ENCODE measurements at regions of chr2 and their contacts with region 1.

Region 1: DNA sequence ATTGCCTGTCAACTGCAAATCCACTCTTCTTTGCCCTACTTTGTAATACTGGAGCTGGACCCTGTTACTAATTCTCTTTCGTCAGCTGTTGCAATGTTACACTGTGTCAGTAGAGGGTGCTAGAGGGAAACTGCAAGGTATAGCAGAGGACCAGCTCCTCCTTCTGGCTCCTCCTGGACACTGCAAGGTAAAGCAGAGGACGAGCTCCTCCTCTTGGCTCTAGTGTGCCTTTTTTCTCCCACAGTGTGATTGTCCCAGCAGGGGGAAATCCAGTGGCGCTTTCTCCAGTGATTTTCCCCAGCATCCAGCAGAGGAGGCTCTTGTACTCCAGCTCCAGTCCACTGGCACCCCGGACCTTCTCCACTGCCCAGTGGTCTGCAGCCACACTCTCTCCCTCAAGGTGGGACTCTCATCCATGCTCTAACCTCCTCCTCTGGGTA is 95.6 kb downstream of the CAPN13 start:
- DNase-seq: peak; percentile 84 to 89 (median 85)
- ATAC-seq: peak; percentile 28 to 80 (median 74)
- H3K4me3 ChIP-seq: no peak overlapping the region
- H3K27ac ChIP-seq: no peak overlapping the region
- H3K4me1 ChIP-seq: peaks cover 0 to 20% (median 4%) of the 10 kb centered on the region in 12 donors
- H3K27me3 ChIP-seq: no peaks in the 10 kb centered on the region
- CTCF ChIP-seq: peak; percentile 97 to 100 (median 99)
- POLR2A ChIP-seq: no peak

Region 2: GRCh38 chr2:30098266-30099005 is 613.2 kb before region 1 on chr2:
- intact Hi-C with region 1: loop called in 1 of 10 experiments (anchors 5 kb)
- DNase-seq: no peak
- ATAC-seq: no peak
- H3K4me3 ChIP-seq: no peak overlapping the region
- H3K27ac ChIP-seq: no peak overlapping the region
- H3K4me1 ChIP-seq: no peaks in the 10 kb centered on the region
- H3K27me3 ChIP-seq: peaks cover 0 to 27% (median 6%) of the 10 kb centered on the region in 9 donors
- CTCF ChIP-seq: no peak
- POLR2A ChIP-seq: no peak

Region 3: GRCh38 chr2:30208452-30208851 is 503.2 kb before region 1 on chr2:
- intact Hi-C with region 1: loop called (anchors 1 to 2 kb)
- DNase-seq: peak in 4 of 5 donors; percentile 63 to 79 (median 74)
- ATAC-seq: peak; percentile 51 to 96 (median 94)
- H3K4me3 ChIP-seq: no peak overlapping the region
- H3K27ac ChIP-seq: peak overlapping the region in 2 of 12 donors; percentile 16 to 35
- H3K4me1 ChIP-seq: peaks cover 0 to 28% (median 4%) of the 10 kb centered on the region in 12 donors
- H3K27me3 ChIP-seq: no peaks in the 10 kb centered on the region
- CTCF ChIP-seq: peak; percentile 82 to 96 (median 90)
- POLR2A ChIP-seq: no peak

Region 4: GRCh38 chr2:30358842-30359241 is 352.8 kb before region 1 on chr2:
- intact Hi-C with region 1: loop called in 2 of 10 experiments (anchors 5 to 10 kb)
- DNase-seq: no peak
- ATAC-seq: no peak
- H3K4me3 ChIP-seq: no peak overlapping the region
- H3K27ac ChIP-seq: peak overlapping the region in 11 of 12 donors; percentile 71 to 90 (median 81)
- H3K4me1 ChIP-seq: peaks cover 14 to 62% (median 47%) of the 10 kb centered on the region in 12 donors
- H3K27me3 ChIP-seq: no peaks in the 10 kb centered on the region
- CTCF ChIP-seq: no peak
- POLR2A ChIP-seq: no peak

Region 5: GRCh38 chr2:30472326-30472725 is 239.3 kb before region 1 on chr2:
- intact Hi-C with region 1: loop called in 1 of 10 experiments (anchors 10 kb)
- DNase-seq: no peak
- ATAC-seq: no peak
- H3K4me3 ChIP-seq: no peak overlapping the region
- H3K27ac ChIP-seq: no peak overlapping the region
- H3K4me1 ChIP-seq: peaks cover 0 to 45% (median 8%) of the 10 kb centered on the region in 12 donors
- H3K27me3 ChIP-seq: no peaks in the 10 kb centered on the region
- CTCF ChIP-seq: no peak
- POLR2A ChIP-seq: no peak

Region 6: GRCh38 chr2:31170071-31170698 is 458.5 kb after region 1 on chr2:
- intact Hi-C with region 1: loop called (anchors 1 to 5 kb)
- DNase-seq: peak; percentile 30 to 73 (median 42)
- ATAC-seq: peak; percentile 57 to 93 (median 86)
- H3K4me3 ChIP-seq: no peak overlapping the region
- H3K27ac ChIP-seq: no peak overlapping the region
- H3K4me1 ChIP-seq: no peaks in the 10 kb centered on the region
- H3K27me3 ChIP-seq: no peaks in the 10 kb centered on the region
- CTCF ChIP-seq: peak; percentile 83 to 95 (median 88)
- POLR2A ChIP-seq: no peak

Region 7: GRCh38 chr2:31831585-31831984 is 1119.9 kb after region 1 on chr2:
- intact Hi-C with region 1: loop called in 1 of 10 experiments (anchors 10 kb)
- DNase-seq: no peak
- ATAC-seq: no peak
- H3K4me3 ChIP-seq: no peak overlapping the region
- H3K27ac ChIP-seq: no peak overlapping the region
- H3K4me1 ChIP-seq: no peaks in the 10 kb centered on the region
- H3K27me3 ChIP-seq: no peaks in the 10 kb centered on the region
- CTCF ChIP-seq: no peak
- POLR2A ChIP-seq: no peak